ENCODE measurements at regions of chr11 and their contacts with region 1.

Region 1: GRCh38 chr11:34366522-34366921 is 8.7 kb upstream of the ABTB2 start:
- DNase-seq: peak; percentile 55
- H3K4me3 Mint-ChIP-seq: no peak overlapping the region
- H3K27ac Mint-ChIP-seq: no peak overlapping the region
- H3K4me1 Mint-ChIP-seq: peaks cover 14% of the 10 kb centered on the region
- H3K27me3 Mint-ChIP-seq: peaks cover 9% of the 10 kb centered on the region

Region 2: GRCh38 chr11:34335331-34335730 is 31.2 kb before region 1 on chr11:
- CTCF ChIA-PET with region 1: no interaction called
- intact Hi-C with region 1: loop called (anchors 1 kb)
- DNase-seq: peak; percentile 16
- H3K4me3 Mint-ChIP-seq: no peak overlapping the region
- H3K27ac Mint-ChIP-seq: no peak overlapping the region
- H3K4me1 Mint-ChIP-seq: peaks cover 33% of the 10 kb centered on the region
- H3K27me3 Mint-ChIP-seq: peaks cover 12% of the 10 kb centered on the region

Region 3: DNA sequence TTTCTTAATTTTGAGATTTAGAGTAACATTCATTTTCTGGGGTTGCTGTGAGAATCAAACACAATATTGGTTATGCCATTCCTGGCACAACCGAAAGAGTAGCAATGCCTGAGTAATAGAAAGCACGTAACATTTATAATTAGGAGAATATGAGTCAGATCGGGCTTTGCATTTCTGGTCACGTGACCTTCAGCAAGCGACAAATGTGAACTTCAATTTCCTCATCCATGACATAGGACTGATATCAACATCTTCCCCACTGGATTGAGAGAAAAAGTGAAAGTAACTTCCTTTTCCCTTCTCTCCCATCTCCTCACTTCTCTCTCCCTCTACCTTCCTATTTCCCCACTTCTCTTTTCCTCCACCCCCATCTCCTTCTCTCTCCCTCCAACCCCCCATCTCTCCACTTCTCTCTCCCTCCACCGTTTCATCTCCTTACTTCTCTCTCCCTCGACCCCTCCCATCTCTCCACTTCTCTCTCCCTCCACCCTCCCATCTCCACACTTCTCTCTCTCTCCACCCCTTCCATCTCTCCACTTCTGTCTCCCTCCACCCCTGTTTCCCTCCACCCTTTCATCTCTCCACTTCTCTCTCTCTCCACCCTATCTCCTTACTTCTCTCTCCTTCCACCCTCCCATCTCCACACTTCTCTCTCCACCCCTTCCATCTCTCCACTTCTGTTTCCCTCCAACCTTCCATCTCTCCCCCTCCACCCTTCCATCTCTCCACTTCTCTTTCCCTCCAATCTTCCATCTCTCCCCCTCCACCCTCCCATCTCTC is 38.7 kb after region 1 on chr11:
- CTCF ChIA-PET with region 1: interaction called, 3 read pairs
- intact Hi-C with region 1: loop called (anchors 1 kb)
- DNase-seq: peak; percentile 28
- H3K4me3 Mint-ChIP-seq: no peak overlapping the region
- H3K27ac Mint-ChIP-seq: no peak overlapping the region
- H3K4me1 Mint-ChIP-seq: peaks cover 16% of the 10 kb centered on the region
- H3K27me3 Mint-ChIP-seq: peaks cover 9% of the 10 kb centered on the region

Region 4: DNA sequence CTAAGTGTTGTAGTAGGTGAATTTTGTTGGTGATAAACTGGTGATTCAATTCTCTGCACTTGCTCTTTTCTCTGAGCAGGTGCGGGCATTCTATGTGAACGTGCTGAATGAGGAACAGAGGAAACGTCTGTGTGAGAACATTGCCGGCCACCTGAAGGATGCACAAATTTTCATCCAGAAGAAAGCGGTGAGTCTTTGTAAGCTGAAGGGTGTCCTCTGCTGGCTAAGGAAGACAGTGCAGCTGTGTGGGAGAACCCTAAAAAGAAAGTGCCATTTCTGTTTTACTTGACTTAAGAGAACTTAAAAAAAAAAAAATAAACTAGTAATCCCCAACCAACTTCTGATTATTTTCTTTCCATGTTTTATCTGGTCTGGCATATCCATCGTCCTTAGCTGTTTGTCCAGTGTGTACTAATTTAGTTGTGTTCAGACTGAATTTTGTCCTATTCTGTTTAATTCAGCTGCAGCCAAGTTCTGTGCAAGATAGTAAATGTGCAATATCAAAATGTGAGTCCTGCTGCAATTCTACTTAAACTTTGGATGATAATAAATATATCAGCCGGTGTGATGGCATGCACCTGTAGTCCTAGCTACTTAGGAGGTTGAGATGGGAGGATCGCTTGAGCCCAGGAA is 101.8 kb after region 1 on chr11:
- CTCF ChIA-PET with region 1: interaction called, 31 read pairs
- intact Hi-C with region 1: loop called (anchors 1 kb)
- DNase-seq: peak; percentile 78
- H3K4me3 Mint-ChIP-seq: no peak overlapping the region
- H3K27ac Mint-ChIP-seq: no peak overlapping the region
- H3K4me1 Mint-ChIP-seq: no peaks in the 10 kb centered on the region
- H3K27me3 Mint-ChIP-seq: no peaks in the 10 kb centered on the region

Region 5: DNA sequence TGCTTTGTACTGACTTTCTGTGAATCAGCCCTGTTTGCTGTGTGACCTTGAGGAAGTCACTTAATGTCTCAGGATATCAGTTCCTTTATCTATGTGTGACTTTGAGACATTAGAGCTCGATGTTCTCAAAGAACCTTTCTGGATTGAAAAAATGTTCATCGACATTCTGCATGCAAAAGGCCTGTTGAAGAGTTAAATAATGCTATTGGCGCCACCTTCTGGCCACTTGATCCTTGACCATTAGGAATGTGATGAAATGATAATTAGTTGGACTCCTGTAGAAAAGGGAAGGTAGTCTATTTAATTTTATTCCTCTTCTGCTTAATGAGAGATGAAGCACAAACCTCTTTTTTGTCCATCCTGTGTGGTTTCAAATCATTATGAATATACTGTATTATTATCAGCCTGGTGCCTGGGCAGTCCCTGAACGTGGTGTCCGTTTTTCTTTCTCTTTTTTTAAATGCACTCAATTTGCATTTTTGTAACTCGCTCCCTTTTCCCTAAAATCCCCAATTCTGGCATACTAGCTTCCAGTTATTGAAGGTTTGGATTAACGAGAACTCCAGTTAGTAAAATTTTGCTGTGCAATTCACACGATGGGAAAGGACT is 126.4 kb after region 1 on chr11:
- CTCF ChIA-PET with region 1: interaction called, 17 read pairs
- intact Hi-C with region 1: loop called (anchors 1 kb)
- DNase-seq: peak; percentile 73
- H3K4me3 Mint-ChIP-seq: no peak overlapping the region
- H3K27ac Mint-ChIP-seq: no peak overlapping the region
- H3K4me1 Mint-ChIP-seq: no peaks in the 10 kb centered on the region
- H3K27me3 Mint-ChIP-seq: no peaks in the 10 kb centered on the region

Measured in activated naive CD4-positive, alpha-beta T cell treated with anti-CD3 and anti-CD28 coated beads for 36 hours (primary cell).